Caco-2 (cell line): ENCODE measurements at regions of chr12 and their contacts with region 1.

Region 1: DNA sequence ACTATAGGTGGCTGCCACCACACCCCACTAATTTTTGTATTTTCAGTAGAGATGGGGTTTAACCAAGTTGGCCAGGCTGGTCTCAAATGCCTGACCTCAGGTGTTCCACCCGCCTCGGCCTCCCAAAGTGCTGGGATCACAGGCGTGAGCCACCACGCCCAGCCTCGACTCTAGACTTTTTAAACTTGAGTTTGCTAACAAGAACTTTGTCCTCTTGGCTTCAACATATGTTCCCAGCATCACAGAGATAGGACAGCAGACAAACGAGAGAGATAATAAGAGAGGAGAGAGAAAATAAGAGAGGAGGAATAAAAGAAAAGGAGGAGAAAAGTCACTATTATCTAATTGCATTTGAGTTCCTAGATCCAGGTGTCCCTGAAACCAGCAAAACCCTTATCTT is 119.1 kb downstream of the CEP83 start:
- DNase-seq: no peak
- H3K4me3 ChIP-seq: no peak overlapping the region
- H3K4me3 Mint-ChIP-seq: no peak overlapping the region
- H3K27ac Mint-ChIP-seq: no peak overlapping the region
- H3K4me1 ChIP-seq: no peaks in the 10 kb centered on the region
- H3K4me1 Mint-ChIP-seq: peaks cover 6% of the 10 kb centered on the region
- H3K27me3 ChIP-seq: no peaks in the 10 kb centered on the region
- H3K27me3 Mint-ChIP-seq: no peaks in the 10 kb centered on the region
- CTCF ChIP-seq: no peak

Region 2: DNA sequence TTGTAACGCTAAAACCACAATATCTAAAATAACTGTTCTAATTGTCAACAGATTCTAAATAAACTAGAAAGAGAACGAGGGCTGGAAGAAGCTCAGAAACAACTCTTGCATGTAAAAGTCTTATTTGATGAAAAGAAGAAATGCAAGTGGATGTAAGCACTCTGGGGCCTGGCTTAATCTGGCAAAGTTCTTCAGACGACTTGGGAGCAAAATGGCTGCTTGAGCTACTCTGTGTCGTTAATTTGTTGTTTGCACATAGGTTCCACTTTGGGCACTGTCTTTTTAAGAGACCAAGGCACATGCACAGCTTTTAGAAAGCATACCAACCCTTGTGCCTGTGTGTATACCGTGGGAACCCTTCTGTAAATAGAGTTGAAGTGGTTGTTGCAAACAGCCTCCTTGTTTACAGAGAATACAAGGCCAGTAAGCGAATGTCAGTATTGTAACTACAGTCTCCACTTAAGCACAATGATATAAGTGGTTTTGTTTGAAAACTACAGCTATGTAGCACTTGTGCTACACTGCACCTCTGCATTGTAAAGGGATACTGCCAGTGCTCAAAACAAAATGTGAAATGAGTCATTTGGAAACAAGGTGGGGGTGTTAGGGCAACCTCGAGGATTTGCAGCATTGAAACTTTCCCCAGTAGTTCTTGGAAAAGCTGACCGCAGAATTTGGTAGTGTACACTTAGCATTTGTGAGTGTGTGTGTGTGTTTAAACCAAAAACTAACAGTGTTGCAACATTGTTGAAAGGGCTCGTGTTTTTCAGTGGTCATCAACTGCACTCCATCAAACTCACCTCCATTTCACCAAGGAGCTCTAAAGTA is 35.2 kb before region 1 on chr12:
- CTCF ChIA-PET with region 1: no interaction called
- POLR2A ChIA-PET with region 1: no interaction called
- intact Hi-C with region 1: loop called (anchors 1 kb)
- DNase-seq: no peak
- H3K4me3 ChIP-seq: no peak overlapping the region
- H3K4me3 Mint-ChIP-seq: no peak overlapping the region
- H3K27ac Mint-ChIP-seq: no peak overlapping the region
- H3K4me1 ChIP-seq: no peaks in the 10 kb centered on the region
- H3K4me1 Mint-ChIP-seq: peaks cover under 1% of the 10 kb centered on the region
- H3K27me3 ChIP-seq: no peaks in the 10 kb centered on the region
- H3K27me3 Mint-ChIP-seq: no peaks in the 10 kb centered on the region
- CTCF ChIP-seq: no peak

Region 3: DNA sequence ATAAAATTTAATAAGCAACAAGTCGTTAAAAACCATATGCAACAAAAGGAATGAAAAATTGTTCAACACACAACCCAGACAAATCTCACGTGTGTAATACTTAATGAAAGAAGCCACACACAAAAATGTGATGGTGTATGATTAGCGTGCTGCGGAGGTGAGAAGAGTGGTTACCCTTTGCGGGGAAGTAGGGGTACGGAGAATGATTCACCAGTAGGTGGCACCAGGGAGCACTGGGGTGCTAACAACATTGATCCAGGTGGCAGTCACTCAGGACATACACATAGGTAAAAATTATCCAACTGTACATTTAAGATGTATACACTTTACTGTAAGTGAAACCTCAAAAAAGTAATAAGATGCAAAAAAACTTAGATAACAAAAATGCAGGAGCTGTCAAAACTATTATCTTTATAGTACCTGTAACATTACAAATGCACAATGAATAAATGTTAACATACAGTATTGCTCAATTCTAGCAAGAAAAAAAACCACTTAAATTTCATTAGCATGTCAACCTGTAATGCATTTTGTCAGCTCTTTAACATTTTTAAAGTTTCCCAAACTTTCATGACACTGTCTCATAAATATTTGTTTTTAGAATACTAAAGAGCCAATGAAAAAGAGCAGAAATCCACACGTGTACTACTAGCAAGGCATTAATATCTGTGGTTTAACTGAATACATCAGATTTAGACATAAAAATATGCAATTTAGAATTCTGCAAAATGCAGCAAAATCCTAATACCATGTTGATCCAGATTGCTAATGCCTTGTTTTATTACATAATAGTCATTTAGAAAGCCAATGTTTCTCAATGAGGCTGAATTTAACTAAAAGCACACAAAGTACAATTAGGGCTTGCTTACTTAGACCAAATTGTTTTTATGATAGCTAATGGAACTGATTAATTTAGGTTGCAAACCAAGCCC is 263.1 kb after region 1 on chr12:
- CTCF ChIA-PET with region 1: no interaction called
- POLR2A ChIA-PET with region 1: no interaction called
- intact Hi-C with region 1: no loop called
- DNase-seq: peak in 1 of 2 experiments; percentile 61
- H3K4me3 ChIP-seq: no peak overlapping the region
- H3K4me3 Mint-ChIP-seq: no peak overlapping the region
- H3K27ac Mint-ChIP-seq: no peak overlapping the region
- H3K4me1 ChIP-seq: no peaks in the 10 kb centered on the region
- H3K4me1 Mint-ChIP-seq: no peaks in the 10 kb centered on the region
- H3K27me3 ChIP-seq: no peaks in the 10 kb centered on the region
- H3K27me3 Mint-ChIP-seq: no peaks in the 10 kb centered on the region
- CTCF ChIP-seq: peak; percentile 51 to 66